ENCODE measurements at regions of chr11 and their contacts with region 1.

Region 1: DNA sequence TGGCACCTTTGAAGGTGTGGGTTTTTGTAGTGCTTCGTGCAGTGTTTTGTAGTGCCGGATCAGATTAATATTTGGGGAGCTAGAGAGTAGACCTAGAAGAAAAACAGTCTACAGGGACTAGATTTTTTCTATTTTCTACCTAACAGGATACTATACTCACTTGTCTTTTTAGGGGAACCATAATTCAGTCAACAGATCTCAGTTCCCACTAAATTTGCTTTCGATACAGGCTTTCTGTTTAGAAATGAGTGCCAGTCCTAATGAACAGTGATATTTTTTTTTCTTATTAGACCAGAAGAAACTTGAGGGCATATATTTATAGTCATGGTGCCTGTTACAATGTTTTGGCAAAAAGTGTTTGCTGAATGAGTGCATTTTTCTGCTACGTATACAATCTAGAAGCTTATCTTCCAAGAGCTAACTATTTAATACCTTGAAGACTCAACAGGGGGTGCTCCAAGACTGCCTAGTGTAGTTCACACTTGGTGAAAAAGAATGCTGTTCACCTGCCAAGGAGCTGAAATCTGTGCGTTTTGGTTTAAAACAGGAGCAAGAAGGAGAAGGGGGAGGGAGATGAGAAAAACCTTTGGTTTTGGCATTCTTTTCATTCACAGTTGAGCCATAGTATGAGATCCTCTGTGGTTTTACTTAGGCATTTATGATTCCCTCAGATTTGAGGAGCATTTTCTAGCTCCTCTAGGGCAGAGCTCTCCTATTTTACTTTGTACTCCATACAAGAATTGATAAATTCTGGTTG is 44.9 kb upstream of the VSTM5 start:
- DNase-seq: no peak
- H3K4me3 ChIP-seq: no peak overlapping the region
- H3K27ac ChIP-seq: no peak overlapping the region
- H3K4me1 ChIP-seq: no peaks in the 10 kb centered on the region
- H3K27me3 ChIP-seq: no peaks in the 10 kb centered on the region
- CTCF ChIP-seq: peak; percentile 8 to 60 (median 36)
- POLR2A ChIP-seq: no peak

Region 2: GRCh38 chr11:94020777-94021481 is 125.6 kb after region 1 on chr11 and contains the start of gene HEPHL1:
- intact Hi-C with region 1: no loop called
- DNase-seq: no peak
- H3K4me3 ChIP-seq: no peak within 1 kb of the TSS
- H3K27ac ChIP-seq: no peak within 1 kb of the TSS
- H3K4me1 ChIP-seq: no peaks in the 10 kb centered on the region
- H3K27me3 ChIP-seq: no peaks in the 10 kb centered on the region
- CTCF ChIP-seq: no peak
- POLR2A ChIP-seq: no peak
- total RNA-seq, gene HEPHL1: 0.09 to 0.17 TPM

Region 3: GRCh38 chr11:94417386-94417987 is 522.2 kb after region 1 on chr11:
- intact Hi-C with region 1: loop called (anchors 10 kb)
- DNase-seq: no peak
- H3K4me3 ChIP-seq: no peak overlapping the region
- H3K27ac ChIP-seq: no peak overlapping the region
- H3K4me1 ChIP-seq: no peaks in the 10 kb centered on the region
- H3K27me3 ChIP-seq: no peaks in the 10 kb centered on the region
- CTCF ChIP-seq: peak in 2 of 4 experiments; percentile 43 to 48
- POLR2A ChIP-seq: no peak

Region 4: GRCh38 chr11:94504689-94505293 is 609.5 kb after region 1 on chr11:
- intact Hi-C with region 1: loop called (anchors 10 kb)
- DNase-seq: no peak
- H3K4me3 ChIP-seq: no peak overlapping the region
- H3K27ac ChIP-seq: no peak overlapping the region
- H3K4me1 ChIP-seq: no peaks in the 10 kb centered on the region
- H3K27me3 ChIP-seq: no peaks in the 10 kb centered on the region
- CTCF ChIP-seq: peak in 3 of 4 experiments; percentile 52 to 68 (median 59)
- POLR2A ChIP-seq: no peak